SK-N-SH (cell line): ENCODE measurements at regions of chr10 and their contacts with region 1.

Region 1: DNA sequence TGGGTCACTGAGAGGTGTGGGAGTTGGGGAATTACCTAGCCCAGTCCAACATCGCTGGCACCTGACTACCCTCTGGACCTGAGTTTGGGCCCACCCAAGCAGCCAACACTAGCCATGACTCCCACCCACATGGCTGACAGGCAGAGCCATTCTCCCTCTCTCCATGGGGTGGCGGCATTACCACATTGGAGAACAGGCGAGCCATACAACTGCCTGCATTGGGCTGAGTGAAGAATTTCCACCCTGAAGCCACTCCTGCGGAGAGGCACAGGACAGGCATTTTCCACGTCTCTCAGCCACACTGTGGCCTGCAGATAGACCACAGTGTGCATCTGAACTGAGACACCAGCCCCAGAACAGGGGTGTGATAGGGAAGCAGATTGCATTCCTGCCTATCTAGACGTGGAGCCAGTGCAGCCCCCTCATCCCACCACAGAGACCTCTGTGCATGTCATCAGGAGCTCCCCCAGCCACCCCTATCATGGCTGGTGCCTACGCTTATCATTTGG is 58.2 kb upstream of the ANTXRL start:
- DNase-seq: peak; percentile 87
- H3K4me3 ChIP-seq: no peak overlapping the region; a peak in 1 of 4 replicates
- H3K27ac ChIP-seq: no peak overlapping the region; a peak in 1 of 4 replicates
- H3K4me1 ChIP-seq: peaks cover 0 to 13% of the 10 kb centered on the region in 2 experiments; a peak in 1 of 4 replicates
- H3K27me3 ChIP-seq: no peaks in the 10 kb centered on the region
- CTCF ChIP-seq: peak; percentile 94
- EP300 ChIP-seq: no peak
- RAD21 ChIP-seq: peak; percentile 100

Region 2: GRCh38 chr10:45249978-45250693 is 978.5 kb before region 1 on chr10:
- CTCF ChIA-PET with region 1: no interaction called
- POLR2A ChIA-PET with region 1: no interaction called
- DNase-seq: peak; percentile 38
- H3K4me3 ChIP-seq: peak overlapping the region; percentile 33 to 61; a peak in 3 of 4 replicates
- H3K27ac ChIP-seq: no peak overlapping the region
- H3K4me1 ChIP-seq: no peaks in the 10 kb centered on the region; a peak in 1 of 4 replicates
- H3K27me3 ChIP-seq: peaks cover 20% of the 10 kb centered on the region; the same call in 1 of the 2 replicates
- CTCF ChIP-seq: peak; percentile 72
- EP300 ChIP-seq: no peak
- RAD21 ChIP-seq: peak; percentile 70

Region 3: DNA sequence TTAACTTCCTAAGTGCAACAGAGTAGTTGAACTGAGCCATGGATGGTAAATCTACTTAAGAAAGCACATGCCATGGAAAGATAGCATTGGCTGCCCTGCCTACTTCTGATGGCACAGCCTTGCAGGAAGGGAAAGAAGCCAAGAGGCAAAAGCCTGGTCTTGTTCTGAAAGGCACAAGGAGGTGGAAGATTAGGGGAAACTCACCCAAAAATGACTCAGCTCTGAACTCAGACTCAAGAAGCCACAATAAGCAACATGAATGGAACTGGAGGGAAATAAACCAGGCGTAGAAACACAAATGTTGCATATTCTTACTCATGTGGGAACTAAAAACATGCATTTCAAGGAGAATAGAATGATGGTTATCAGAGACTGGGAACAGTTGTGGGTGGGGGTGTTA is 875.4 kb before region 1 on chr10:
- CTCF ChIA-PET with region 1: no interaction called
- POLR2A ChIA-PET with region 1: no interaction called
- DNase-seq: no peak
- H3K4me3 ChIP-seq: no peak overlapping the region
- H3K27ac ChIP-seq: no peak overlapping the region
- H3K4me1 ChIP-seq: no peaks in the 10 kb centered on the region
- H3K27me3 ChIP-seq: no peaks in the 10 kb centered on the region; the same call in 1 of the 2 replicates
- CTCF ChIP-seq: no peak
- EP300 ChIP-seq: no peak
- RAD21 ChIP-seq: no peak

Region 4: GRCh38 chr10:46216836-46217751 is 11.5 kb before region 1 on chr10:
- CTCF ChIA-PET with region 1: interaction called, 54 read pairs
- POLR2A ChIA-PET with region 1: interaction called, 3 read pairs
- DNase-seq: peak; percentile 12
- H3K4me3 ChIP-seq: no peak overlapping the region
- H3K27ac ChIP-seq: no peak overlapping the region
- H3K4me1 ChIP-seq: peaks cover 0 to 28% of the 10 kb centered on the region in 2 experiments; a peak in 2 of 4 replicates
- H3K27me3 ChIP-seq: no peaks in the 10 kb centered on the region; the same call in 1 of the 2 replicates
- CTCF ChIP-seq: no peak
- EP300 ChIP-seq: no peak
- RAD21 ChIP-seq: no peak

Region 5: DNA sequence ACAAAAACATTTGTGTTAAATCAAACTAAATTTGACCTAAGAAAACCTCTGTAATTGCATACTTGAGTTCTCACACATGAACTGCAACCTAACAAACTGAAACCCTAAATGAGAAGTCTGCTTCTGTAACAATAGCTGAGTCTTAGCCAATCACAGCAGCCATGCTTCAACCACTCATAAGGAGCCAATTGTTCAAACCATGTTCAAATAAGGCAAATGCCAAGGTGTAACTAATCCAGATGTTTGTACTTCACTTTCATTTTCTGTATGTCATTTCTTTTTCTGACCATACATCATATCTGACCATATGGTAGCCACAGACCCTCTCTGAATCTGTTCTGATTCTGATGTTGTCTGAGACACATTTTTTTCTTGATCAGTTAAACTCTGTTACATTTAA is 10.6 kb after region 1 on chr10:
- CTCF ChIA-PET with region 1: interaction called, 28 read pairs
- POLR2A ChIA-PET with region 1: no interaction called
- DNase-seq: no peak
- H3K4me3 ChIP-seq: no peak overlapping the region
- H3K27ac ChIP-seq: no peak overlapping the region
- H3K4me1 ChIP-seq: peaks cover 0 to 10% of the 10 kb centered on the region in 2 experiments; a peak in 1 of 4 replicates
- H3K27me3 ChIP-seq: no peaks in the 10 kb centered on the region
- CTCF ChIP-seq: no peak
- EP300 ChIP-seq: no peak
- RAD21 ChIP-seq: no peak

Region 6: GRCh38 chr10:46247808-46248569 is 19.4 kb after region 1 on chr10:
- CTCF ChIA-PET with region 1: interaction called, 136 read pairs
- POLR2A ChIA-PET with region 1: no interaction called
- DNase-seq: peak; percentile 83
- H3K4me3 ChIP-seq: no peak overlapping the region
- H3K27ac ChIP-seq: peak overlapping the region in 1 of 2 experiments; percentile 94; a peak in 2 of 4 replicates
- H3K4me1 ChIP-seq: peaks cover 0 to 27% of the 10 kb centered on the region in 2 experiments; a peak in 2 of 4 replicates
- H3K27me3 ChIP-seq: no peaks in the 10 kb centered on the region
- CTCF ChIP-seq: no peak
- EP300 ChIP-seq: peak in 1 of 2 experiments; percentile 82; a peak in 2 of 4 replicates
- RAD21 ChIP-seq: no peak; the same call in 1 of the 2 replicates

Region 7: DNA sequence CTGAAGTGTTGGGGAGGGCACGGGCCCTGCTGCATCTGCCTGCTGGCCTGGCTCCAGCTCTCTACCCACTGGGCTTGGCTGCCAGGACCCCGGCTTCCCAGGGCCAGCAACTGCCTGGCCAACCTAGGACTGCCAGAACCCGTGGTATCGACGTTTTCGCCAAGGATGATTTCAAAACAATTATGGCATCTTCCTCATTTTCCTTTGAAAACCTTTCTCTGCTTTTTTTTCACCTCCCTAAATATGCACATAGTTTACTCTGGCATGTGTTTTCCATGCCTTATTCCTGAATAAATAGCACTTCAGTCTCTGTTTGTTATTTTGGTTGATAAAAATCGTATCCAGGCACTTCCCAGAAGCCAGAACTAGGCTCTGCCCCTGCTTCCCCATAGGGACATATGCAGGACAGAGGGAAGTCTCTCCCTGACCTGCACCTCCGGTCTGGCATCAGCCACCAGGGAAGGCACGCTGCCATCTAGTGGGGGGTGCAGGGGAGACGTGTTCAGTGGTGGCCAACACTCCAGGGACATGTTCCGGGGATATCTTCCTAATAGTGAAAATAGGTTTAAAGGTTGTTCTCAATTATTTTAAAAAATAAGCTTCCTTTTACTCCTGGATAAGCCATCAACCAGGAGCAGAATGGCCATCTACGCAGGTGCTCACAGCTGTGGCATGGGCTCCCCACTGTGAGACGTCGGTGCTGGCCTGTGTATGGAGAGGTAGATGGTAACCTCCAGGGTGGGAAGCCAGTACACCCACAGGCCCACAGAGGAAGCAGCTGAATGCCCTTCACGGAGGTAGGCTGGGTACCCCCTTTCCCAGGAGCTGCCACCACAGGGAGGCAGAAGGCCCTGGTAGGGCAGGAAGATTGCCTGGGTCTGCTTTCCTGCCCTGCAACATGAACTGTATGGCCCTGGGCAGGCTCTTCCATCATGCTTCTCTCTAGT is 27.5 kb after region 1 on chr10:
- CTCF ChIA-PET with region 1: interaction called, 136 read pairs
- POLR2A ChIA-PET with region 1: no interaction called
- DNase-seq: peak; percentile 95
- H3K4me3 ChIP-seq: no peak overlapping the region
- H3K27ac ChIP-seq: peak overlapping the region in 1 of 2 experiments; percentile 73; a peak in 2 of 4 replicates
- H3K4me1 ChIP-seq: peaks cover 0 to 14% of the 10 kb centered on the region in 2 experiments; a peak in 1 of 4 replicates
- H3K27me3 ChIP-seq: peaks cover 5% of the 10 kb centered on the region; the same call in 1 of the 2 replicates
- CTCF ChIP-seq: peak; percentile 65
- EP300 ChIP-seq: peak in 1 of 2 experiments; percentile 42; a peak in 1 of 4 replicates
- RAD21 ChIP-seq: peak; percentile 82

Region 8: DNA sequence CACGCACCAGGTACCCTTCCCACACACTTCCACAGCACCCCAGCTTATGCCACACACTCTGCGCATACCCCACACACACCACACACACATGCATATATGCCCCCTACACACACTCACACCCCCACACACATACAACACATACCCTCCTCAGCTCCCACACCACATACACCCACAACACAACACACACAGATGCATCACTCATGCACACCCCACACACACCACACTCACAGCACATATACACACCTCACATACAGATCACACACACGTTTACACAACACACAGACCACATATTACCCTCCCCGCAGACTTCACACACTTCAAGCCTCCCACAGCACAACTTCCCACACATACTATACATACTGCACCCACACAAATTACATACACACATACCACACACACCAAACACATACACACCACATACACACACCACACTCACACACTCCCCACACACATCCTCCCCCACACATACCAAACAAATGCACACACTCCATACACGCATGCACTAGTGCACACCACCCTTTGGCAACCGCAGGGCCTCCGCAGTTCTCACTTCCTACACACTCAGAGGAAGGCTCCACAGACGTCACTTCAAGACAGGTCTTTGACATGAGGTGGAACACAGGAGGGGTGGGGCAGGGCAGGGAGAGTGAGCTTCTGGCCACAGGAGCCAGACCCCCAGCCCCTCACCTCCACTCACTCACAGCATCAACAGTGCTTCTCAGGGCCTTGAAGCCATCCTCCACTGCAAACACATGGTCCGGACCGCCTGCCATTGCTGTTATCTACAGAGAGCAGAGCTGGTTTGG is 39.7 kb after region 1 on chr10:
- CTCF ChIA-PET with region 1: interaction called, 20 read pairs
- POLR2A ChIA-PET with region 1: no interaction called
- DNase-seq: no peak
- H3K4me3 ChIP-seq: no peak overlapping the region
- H3K27ac ChIP-seq: no peak overlapping the region
- H3K4me1 ChIP-seq: peaks cover 0 to 6% of the 10 kb centered on the region in 2 experiments; a peak in 1 of 4 replicates
- H3K27me3 ChIP-seq: no peaks in the 10 kb centered on the region
- CTCF ChIP-seq: no peak
- EP300 ChIP-seq: no peak
- RAD21 ChIP-seq: no peak

Region 9: GRCh38 chr10:46325023-46325422 is 96.4 kb after region 1 on chr10:
- CTCF ChIA-PET with region 1: interaction called, 10 read pairs
- POLR2A ChIA-PET with region 1: no interaction called
- DNase-seq: no peak
- H3K4me3 ChIP-seq: no peak overlapping the region
- H3K27ac ChIP-seq: no peak overlapping the region
- H3K4me1 ChIP-seq: no peaks in the 10 kb centered on the region
- H3K27me3 ChIP-seq: no peaks in the 10 kb centered on the region
- CTCF ChIP-seq: peak; percentile 29; the same call in 1 of the 2 replicates
- EP300 ChIP-seq: no peak
- RAD21 ChIP-seq: peak; percentile 13; the same call in 1 of the 2 replicates